ENCODE measurements at regions of chr9 and their contacts with region 1.

Region 1: GRCh38 chr9:138007911-138008841 is 130.6 kb downstream of the CACNA1B start:
- DNase-seq: peak in 1 of 4 donors; percentile 6
- ATAC-seq: no peak
- H3K4me3 ChIP-seq: no peak overlapping the region
- H3K27ac ChIP-seq: no peak overlapping the region
- H3K4me1 ChIP-seq: no peaks in the 10 kb centered on the region
- H3K27me3 ChIP-seq: no peaks in the 10 kb centered on the region
- CTCF ChIP-seq: no peak
- POLR2A ChIP-seq: no peak

Region 2: GRCh38 chr9:137945581-137945980 is 62.6 kb before region 1 on chr9:
- intact Hi-C with region 1: no loop called
- DNase-seq: no peak
- ATAC-seq: no peak
- H3K4me3 ChIP-seq: no peak overlapping the region
- H3K27ac ChIP-seq: no peak overlapping the region
- H3K4me1 ChIP-seq: no peaks in the 10 kb centered on the region
- H3K27me3 ChIP-seq: no peaks in the 10 kb centered on the region
- CTCF ChIP-seq: no peak
- POLR2A ChIP-seq: no peak

Region 3: DNA sequence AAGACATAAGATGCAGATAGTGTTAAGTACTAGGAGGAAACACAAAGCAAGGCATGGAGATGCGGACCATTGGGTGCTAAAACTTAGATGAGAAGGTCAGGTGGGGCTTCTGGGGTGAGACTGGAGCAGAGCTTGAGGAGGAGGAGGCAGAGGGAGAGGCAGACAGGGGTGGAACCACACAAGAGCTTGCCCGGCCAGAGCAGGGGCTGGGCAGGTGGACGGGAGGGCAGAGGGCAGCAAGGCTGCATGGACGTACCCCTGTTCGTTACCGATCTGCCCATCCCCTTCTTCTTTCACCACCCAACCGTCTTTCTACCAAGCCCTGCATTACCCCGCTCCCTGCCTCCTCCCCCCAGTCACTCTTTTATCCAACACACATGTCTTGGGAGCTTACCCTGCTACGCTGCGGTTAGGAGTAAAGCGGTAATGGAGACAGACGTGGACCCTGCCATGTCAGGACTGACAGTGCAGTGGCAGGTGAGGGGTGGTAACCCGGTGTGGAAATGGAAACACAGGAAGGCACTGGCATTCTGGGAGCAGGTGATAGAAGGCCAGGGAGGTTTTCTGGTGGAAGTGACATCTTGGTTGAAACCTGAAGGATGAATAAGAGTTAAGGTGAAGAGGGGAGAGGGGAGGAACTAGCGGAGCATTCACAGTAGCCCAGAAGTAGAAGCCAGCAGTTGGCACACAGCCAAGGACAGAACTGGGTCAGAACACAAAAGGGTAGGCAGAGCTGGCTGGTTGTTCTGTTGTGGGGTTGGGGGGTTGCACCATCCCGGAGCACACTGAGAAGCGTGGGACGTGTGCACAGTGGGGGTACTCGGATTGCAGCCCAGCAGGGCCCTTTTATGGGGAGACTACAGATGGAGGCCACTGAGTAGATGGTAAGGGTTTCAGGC is 36.6 kb after region 1 on chr9:
- intact Hi-C with region 1: no loop called
- DNase-seq: peak in 1 of 4 donors; percentile 12
- ATAC-seq: no peak
- H3K4me3 ChIP-seq: no peak overlapping the region
- H3K27ac ChIP-seq: no peak overlapping the region
- H3K4me1 ChIP-seq: no peaks in the 10 kb centered on the region
- H3K27me3 ChIP-seq: no peaks in the 10 kb centered on the region
- CTCF ChIP-seq: no peak
- POLR2A ChIP-seq: no peak

Region 4: DNA sequence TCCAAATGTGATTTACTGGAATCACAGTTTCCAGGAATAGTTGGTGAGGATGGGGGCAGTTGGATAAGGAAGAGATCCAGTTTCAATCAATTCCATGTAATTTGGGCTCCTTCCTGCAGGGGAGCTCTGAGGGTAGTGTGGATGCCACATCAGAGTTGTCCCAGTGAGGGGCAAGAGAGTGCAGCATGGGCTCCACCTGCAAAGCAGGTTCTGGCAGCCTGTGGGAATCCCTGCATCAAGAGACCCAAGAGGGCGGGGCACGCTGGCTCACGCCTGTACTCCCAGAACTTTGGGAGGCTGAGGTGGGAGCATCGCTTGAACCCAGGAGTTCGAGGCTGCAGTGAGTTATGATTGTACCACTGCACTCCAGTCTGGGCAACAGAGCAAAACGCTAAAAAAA is 57.9 kb after region 1 on chr9:
- intact Hi-C with region 1: loop called (anchors 10 kb)
- DNase-seq: peak in 1 of 4 donors; percentile 7
- ATAC-seq: no peak
- H3K4me3 ChIP-seq: no peak overlapping the region
- H3K27ac ChIP-seq: no peak overlapping the region
- H3K4me1 ChIP-seq: no peaks in the 10 kb centered on the region
- H3K27me3 ChIP-seq: no peaks in the 10 kb centered on the region
- CTCF ChIP-seq: no peak
- POLR2A ChIP-seq: no peak

Measured in body of pancreas (tissue), 4 donors.